MCF 10A (cell line): ENCODE measurements at regions of chr1 and their contacts with region 1.

Region 1: GRCh38 chr1:26695356-26696118 is at the start of gene ARID1A:
- DNase-seq: peak; percentile 96
- H3K4me3 Mint-ChIP-seq: no peak within 1 kb of the TSS
- H3K27ac Mint-ChIP-seq: peak within 1 kb of the TSS; percentile 71
- H3K4me1 Mint-ChIP-seq: peaks cover 13% of the 10 kb centered on the region
- H3K27me3 Mint-ChIP-seq: no peaks in the 10 kb centered on the region
- CTCF ChIP-seq: no peak
- total RNA-seq, gene ARID1A: 54.2 and 56.9 TPM in 2 replicates

Region 2: GRCh38 chr1:26500488-26501175 is 194.9 kb before region 1 on chr1:
- CTCF ChIA-PET with region 1: no interaction called
- POLR2A ChIA-PET with region 1: interaction called, 19 read pairs
- intact Hi-C with region 1: no loop called
- DNase-seq: peak; percentile 86
- H3K4me3 Mint-ChIP-seq: peak overlapping the region; percentile 86
- H3K27ac Mint-ChIP-seq: peak overlapping the region; percentile 91
- H3K4me1 Mint-ChIP-seq: no peaks in the 10 kb centered on the region
- H3K27me3 Mint-ChIP-seq: no peaks in the 10 kb centered on the region
- CTCF ChIP-seq: no peak

Region 3: GRCh38 chr1:26602378-26602959 is 93.1 kb before region 1 on chr1:
- CTCF ChIA-PET with region 1: interaction called, 4 read pairs
- POLR2A ChIA-PET with region 1: interaction called, 26 read pairs
- intact Hi-C with region 1: loop called (anchors 1 kb)
- DNase-seq: peak; percentile 77
- H3K4me3 Mint-ChIP-seq: no peak overlapping the region
- H3K27ac Mint-ChIP-seq: no peak overlapping the region
- H3K4me1 Mint-ChIP-seq: no peaks in the 10 kb centered on the region
- H3K27me3 Mint-ChIP-seq: peaks cover 28% of the 10 kb centered on the region
- CTCF ChIP-seq: peak; percentile 77

Region 4: GRCh38 chr1:26677306-26678115 is 18.0 kb before region 1 on chr1:
- CTCF ChIA-PET with region 1: interaction called, 54 read pairs
- POLR2A ChIA-PET with region 1: interaction called, 104 read pairs
- intact Hi-C with region 1: no loop called
- DNase-seq: peak; percentile 97
- H3K4me3 Mint-ChIP-seq: no peak overlapping the region
- H3K27ac Mint-ChIP-seq: no peak overlapping the region
- H3K4me1 Mint-ChIP-seq: peaks cover 16% of the 10 kb centered on the region
- H3K27me3 Mint-ChIP-seq: no peaks in the 10 kb centered on the region
- CTCF ChIP-seq: peak; percentile 66

Region 5: DNA sequence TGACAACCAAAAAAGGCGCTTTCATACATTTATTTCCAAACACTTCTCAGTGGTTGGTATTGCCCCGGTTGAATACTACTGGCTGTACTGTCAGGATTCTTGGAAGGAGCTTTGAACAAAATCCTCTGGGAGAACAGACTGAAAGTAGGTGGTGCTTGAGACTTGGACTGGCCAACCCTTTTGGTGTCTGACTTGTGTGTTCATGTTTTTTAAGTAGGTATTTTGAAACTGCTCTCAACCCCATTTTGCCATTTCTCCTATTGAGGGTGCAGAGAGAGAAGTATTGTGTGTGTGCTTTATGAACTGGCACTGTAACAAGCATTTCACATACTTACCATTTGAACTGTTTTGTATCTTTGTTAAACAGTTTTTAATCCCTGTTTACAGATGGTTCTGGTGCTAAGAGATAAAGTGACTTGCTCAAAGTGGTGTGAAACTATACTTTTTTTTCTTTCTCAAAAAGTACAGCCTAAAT is 21.5 kb after region 1 on chr1:
- CTCF ChIA-PET with region 1: interaction called, 10 read pairs
- POLR2A ChIA-PET with region 1: interaction called, 63 read pairs
- intact Hi-C with region 1: no loop called
- DNase-seq: peak; percentile 45
- H3K4me3 Mint-ChIP-seq: no peak overlapping the region
- H3K27ac Mint-ChIP-seq: peak overlapping the region; percentile 67
- H3K4me1 Mint-ChIP-seq: peaks cover 8% of the 10 kb centered on the region
- H3K27me3 Mint-ChIP-seq: no peaks in the 10 kb centered on the region
- CTCF ChIP-seq: no peak

Region 6: GRCh38 chr1:26733982-26734381 is 38.4 kb after region 1 on chr1:
- CTCF ChIA-PET with region 1: no interaction called
- POLR2A ChIA-PET with region 1: interaction called, 7 read pairs
- intact Hi-C with region 1: loop called (anchors 2 kb)
- DNase-seq: peak; percentile 72
- H3K4me3 Mint-ChIP-seq: no peak overlapping the region
- H3K27ac Mint-ChIP-seq: no peak overlapping the region
- H3K4me1 Mint-ChIP-seq: peaks cover 25% of the 10 kb centered on the region
- H3K27me3 Mint-ChIP-seq: no peaks in the 10 kb centered on the region
- CTCF ChIP-seq: no peak

Region 7: DNA sequence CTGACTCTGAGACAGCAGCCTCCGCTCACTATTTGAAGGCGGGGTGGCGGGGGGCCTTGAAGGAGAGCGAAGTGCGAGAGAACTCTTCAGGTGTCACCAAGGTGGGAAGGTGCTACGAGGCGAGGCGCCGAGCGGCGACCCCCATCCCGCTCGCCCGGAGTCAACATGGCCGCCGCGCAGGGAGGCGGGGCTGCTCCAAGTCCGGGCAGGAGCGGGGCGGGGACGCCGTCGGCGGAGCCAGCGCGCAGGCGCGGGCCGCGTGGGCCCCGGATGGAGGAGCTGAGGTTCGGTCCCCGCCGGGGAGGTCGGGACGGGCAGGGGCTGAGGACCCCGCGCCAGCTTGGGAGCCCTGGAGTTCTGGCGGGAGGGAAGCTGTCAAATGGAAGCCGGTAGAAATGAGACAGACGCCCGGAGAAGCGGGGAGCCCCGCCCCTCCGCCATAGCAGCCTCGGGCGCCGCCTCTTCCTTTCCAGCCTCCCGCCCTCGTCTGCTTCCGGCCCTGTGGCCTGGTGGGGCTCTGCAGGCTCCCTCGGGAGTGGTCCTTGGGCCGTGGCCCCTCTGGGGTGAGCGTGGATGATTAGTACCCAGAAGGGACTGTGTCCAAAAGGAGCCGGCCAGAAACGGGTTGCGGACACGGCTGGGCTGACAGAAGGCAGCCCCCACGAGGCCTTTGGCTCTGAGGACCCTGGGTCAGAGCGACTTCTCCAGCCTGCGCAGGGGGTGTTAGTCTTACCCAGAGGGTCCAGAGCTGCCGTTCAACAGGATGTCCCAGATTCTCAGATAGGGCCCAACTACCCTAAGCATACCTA is 92.4 kb after region 1 on chr1 and contains the start of gene PIGV:
- CTCF ChIA-PET with region 1: interaction called, 30 read pairs
- POLR2A ChIA-PET with region 1: interaction called, 109 read pairs
- intact Hi-C with region 1: loop called (anchors 1 kb)
- DNase-seq: peak; percentile 79
- H3K4me3 Mint-ChIP-seq: peak within 1 kb of the TSS; percentile 97
- H3K27ac Mint-ChIP-seq: peak within 1 kb of the TSS; percentile 100
- H3K4me1 Mint-ChIP-seq: peaks cover 44% of the 10 kb centered on the region
- H3K27me3 Mint-ChIP-seq: no peaks in the 10 kb centered on the region
- CTCF ChIP-seq: no peak
- total RNA-seq, gene PIGV: 13.3 and 14.7 TPM in 2 replicates